IMR-90 (cell line): ENCODE measurements at regions of chr10 and their contacts with region 1.

Region 1: GRCh38 chr10:94402015-94402842 is at the start of gene TBC1D12:
- DNase-seq: peak; percentile 97
- ATAC-seq: peak; percentile 90
- H3K4me3 ChIP-seq: peak within 1 kb of the TSS; percentile 83
- H3K27ac ChIP-seq: peak within 1 kb of the TSS; percentile 90
- H3K4me1 ChIP-seq: no peaks in the 10 kb centered on the region
- H3K27me3 ChIP-seq: no peaks in the 10 kb centered on the region
- CTCF ChIP-seq: no peak
- POLR2A ChIP-seq: 0 out of 2 replicates have a peak, but pooled peaks have one; percentile 56
- RAD21 ChIP-seq: no peak
- total RNA-seq, gene TBC1D12: 5.4 and 8.1 TPM in 2 replicates

Region 2: GRCh38 chr10:94362360-94363250 is 39.6 kb before region 1 on chr10 and contains the start of gene NOC3L:
- CTCF ChIA-PET with region 1: no interaction called
- POLR2A ChIA-PET with region 1: no interaction called
- dilution Hi-C with region 1: no loop called
- in situ Hi-C with region 1: no loop called
- intact Hi-C with region 1: loop called (anchors 1 kb)
- DNase-seq: peak; percentile 96
- ATAC-seq: peak; percentile 97
- H3K4me3 ChIP-seq: peak within 1 kb of the TSS; percentile 64
- H3K27ac ChIP-seq: peak within 1 kb of the TSS; percentile 56
- H3K4me1 ChIP-seq: peaks cover 2% of the 10 kb centered on the region
- H3K27me3 ChIP-seq: no peaks in the 10 kb centered on the region; the same call in 1 of the 2 replicates
- CTCF ChIP-seq: peak; percentile 99
- POLR2A ChIP-seq: peak; percentile 89
- RAD21 ChIP-seq: peak; percentile 51
- total RNA-seq, gene NOC3L: 26.5 and 40.5 TPM in 2 replicates

Region 3: DNA sequence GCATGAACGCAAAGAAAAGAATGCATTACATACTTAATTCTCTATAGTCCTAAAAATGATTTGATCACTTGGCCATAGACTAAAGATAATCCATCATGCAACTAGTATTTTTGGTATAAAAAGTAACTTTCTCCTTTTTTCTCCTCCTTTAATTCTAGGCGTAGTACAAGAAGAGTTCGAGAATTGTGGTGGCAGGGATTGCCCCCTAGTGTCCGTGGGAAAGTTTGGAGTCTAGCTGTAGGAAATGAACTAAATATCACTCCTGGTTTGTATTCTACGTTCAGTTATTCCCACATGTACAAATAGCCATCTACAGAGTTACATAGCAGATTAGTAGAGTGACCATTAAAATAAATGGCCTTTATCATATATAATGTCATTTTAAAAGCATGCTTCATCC is 97.8 kb after region 1 on chr10:
- CTCF ChIA-PET with region 1: no interaction called
- POLR2A ChIA-PET with region 1: no interaction called
- dilution Hi-C with region 1: no loop called
- in situ Hi-C with region 1: no loop called
- intact Hi-C with region 1: no loop called
- DNase-seq: no peak
- ATAC-seq: no peak
- H3K4me3 ChIP-seq: no peak overlapping the region
- H3K27ac ChIP-seq: no peak overlapping the region
- H3K4me1 ChIP-seq: peaks cover 4% of the 10 kb centered on the region; the same call in 1 of the 2 replicates
- H3K27me3 ChIP-seq: no peaks in the 10 kb centered on the region
- CTCF ChIP-seq: peak; percentile 29; the same call in 1 of the 2 replicates
- POLR2A ChIP-seq: no peak
- RAD21 ChIP-seq: no peak

Region 4: GRCh38 chr10:94545391-94546048 is 143.3 kb after region 1 on chr10 and contains the start of gene HELLS:
- CTCF ChIA-PET with region 1: no interaction called
- POLR2A ChIA-PET with region 1: no interaction called
- dilution Hi-C with region 1: no loop called
- in situ Hi-C with region 1: no loop called
- intact Hi-C with region 1: loop called (anchors 2 kb)
- DNase-seq: peak; percentile 82
- ATAC-seq: peak; percentile 80
- H3K4me3 ChIP-seq: peak within 1 kb of the TSS; percentile 87
- H3K27ac ChIP-seq: peak within 1 kb of the TSS; percentile 86
- H3K4me1 ChIP-seq: no peaks in the 10 kb centered on the region
- H3K27me3 ChIP-seq: no peaks in the 10 kb centered on the region
- CTCF ChIP-seq: no peak
- POLR2A ChIP-seq: peak; percentile 75; the same call in 1 of the 2 replicates
- RAD21 ChIP-seq: no peak
- total RNA-seq, gene HELLS: 29.8 and 65.8 TPM in 2 replicates